ENCODE measurements at regions of chr3 and their contacts with region 1.

Region 1: GRCh38 chr3:53195602-53196574 is 34.9 kb downstream of the PRKCD start:
- DNase-seq: peak; percentile 76
- ATAC-seq: peak; percentile 72
- H3K4me3 Mint-ChIP-seq: no peak overlapping the region
- H3K27ac Mint-ChIP-seq: no peak overlapping the region
- H3K4me1 Mint-ChIP-seq: peaks cover 6% of the 10 kb centered on the region
- H3K27me3 Mint-ChIP-seq: no peaks in the 10 kb centered on the region

Region 2: DNA sequence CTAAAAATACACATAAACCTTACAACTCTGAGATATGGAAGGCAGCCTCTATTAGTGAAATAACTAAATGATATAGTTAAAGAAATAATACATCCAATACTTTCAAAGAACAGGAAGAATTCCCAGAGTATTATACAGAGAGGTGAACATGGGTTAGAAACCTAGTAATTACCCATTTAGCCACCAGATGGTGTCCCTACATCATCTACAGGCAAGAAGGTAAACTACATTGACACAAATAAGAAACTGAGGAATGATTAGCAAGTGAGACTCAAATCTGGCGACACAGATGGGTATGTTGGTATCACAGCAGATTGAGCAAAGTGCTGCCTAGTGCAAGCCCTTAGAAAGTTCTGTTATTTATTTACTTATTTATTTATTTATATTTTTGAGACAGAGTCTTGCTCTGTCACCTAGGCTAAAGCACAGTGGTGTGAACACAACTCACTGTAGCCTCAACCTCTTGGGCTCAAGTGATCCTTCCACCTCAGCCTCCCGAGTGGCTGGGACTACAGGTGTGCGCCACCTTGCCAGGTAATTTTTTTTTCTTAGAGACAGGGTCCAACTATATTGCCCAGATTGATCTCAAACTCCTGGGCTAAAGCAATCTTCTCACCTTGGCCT is 453.4 kb before region 1 on chr3:
- CTCF ChIA-PET with region 1: interaction called, 4 read pairs
- POLR2A ChIA-PET with region 1: no interaction called
- intact Hi-C with region 1: loop called in 1 of 2 experiments (anchors 5 kb)
- DNase-seq: no peak
- ATAC-seq: no peak
- H3K4me3 Mint-ChIP-seq: no peak overlapping the region
- H3K27ac Mint-ChIP-seq: no peak overlapping the region
- H3K4me1 Mint-ChIP-seq: no peaks in the 10 kb centered on the region
- H3K27me3 Mint-ChIP-seq: no peaks in the 10 kb centered on the region

Region 3: GRCh38 chr3:52770496-52771333 is 425.2 kb before region 1 on chr3 and contains the start of gene NEK4:
- CTCF ChIA-PET with region 1: no interaction called
- POLR2A ChIA-PET with region 1: no interaction called
- intact Hi-C with region 1: no loop called
- DNase-seq: peak; percentile 93
- ATAC-seq: peak; percentile 98
- H3K4me3 Mint-ChIP-seq: peak within 1 kb of the TSS; percentile 81
- H3K27ac Mint-ChIP-seq: peak within 1 kb of the TSS; percentile 94
- H3K4me1 Mint-ChIP-seq: peaks cover 15% of the 10 kb centered on the region
- H3K27me3 Mint-ChIP-seq: no peaks in the 10 kb centered on the region
- total RNA-seq, gene NEK4: 19.1 to 21.4 TPM

Region 4: DNA sequence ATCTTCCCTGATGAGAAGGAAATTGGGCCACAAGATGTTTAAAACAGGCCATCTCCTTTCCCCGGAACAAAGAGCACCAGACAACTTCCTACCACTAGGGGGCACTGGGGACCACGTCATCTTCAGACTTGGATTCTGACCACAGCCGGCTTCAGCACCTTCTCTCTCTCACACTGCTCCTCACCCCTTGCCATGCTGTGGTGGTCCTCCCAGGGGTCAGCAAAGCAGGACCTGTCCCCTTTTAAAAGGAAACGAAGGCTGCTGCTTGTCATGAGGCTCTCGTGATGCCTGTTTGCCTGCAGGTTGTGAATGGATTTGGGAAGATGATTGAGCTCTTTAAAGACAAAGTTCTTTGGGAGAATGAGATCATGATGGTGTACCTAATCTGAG is 81.9 kb before region 1 on chr3:
- CTCF ChIA-PET with region 1: interaction called, 69 read pairs
- POLR2A ChIA-PET with region 1: no interaction called
- intact Hi-C with region 1: loop called (anchors 1 kb)
- DNase-seq: peak; percentile 91
- ATAC-seq: peak; percentile 49
- H3K4me3 Mint-ChIP-seq: no peak overlapping the region
- H3K27ac Mint-ChIP-seq: no peak overlapping the region
- H3K4me1 Mint-ChIP-seq: peaks cover 15% of the 10 kb centered on the region
- H3K27me3 Mint-ChIP-seq: no peaks in the 10 kb centered on the region

Region 5: GRCh38 chr3:53160660-53161449 is 35.0 kb before region 1 on chr3 and contains the start of gene PRKCD:
- CTCF ChIA-PET with region 1: interaction called, 6 read pairs
- POLR2A ChIA-PET with region 1: no interaction called
- intact Hi-C with region 1: loop called (anchors 1 to 5 kb)
- DNase-seq: peak; percentile 91
- ATAC-seq: peak; percentile 75
- H3K4me3 Mint-ChIP-seq: peak within 1 kb of the TSS; percentile 75
- H3K27ac Mint-ChIP-seq: peak within 1 kb of the TSS; percentile 83
- H3K4me1 Mint-ChIP-seq: peaks cover 19% of the 10 kb centered on the region
- H3K27me3 Mint-ChIP-seq: peaks cover 10% of the 10 kb centered on the region
- total RNA-seq, gene PRKCD: 22.0 to 26.5 TPM

Region 6: GRCh38 chr3:53219895-53220483 is 24.1 kb after region 1 on chr3:
- CTCF ChIA-PET with region 1: interaction called, 18 read pairs
- POLR2A ChIA-PET with region 1: no interaction called
- intact Hi-C with region 1: no loop called
- DNase-seq: peak; percentile 93
- ATAC-seq: peak; percentile 99
- H3K4me3 Mint-ChIP-seq: no peak overlapping the region
- H3K27ac Mint-ChIP-seq: no peak overlapping the region
- H3K4me1 Mint-ChIP-seq: peaks cover 2% of the 10 kb centered on the region
- H3K27me3 Mint-ChIP-seq: no peaks in the 10 kb centered on the region

Measured in activated CD4-positive, alpha-beta T cell treated with anti-CD3 and anti-CD28 coated beads for 36 hours (primary cell).